Naive thymus-derived CD4-positive, alpha-beta T cell (primary cell): ENCODE measurements at regions of chr1 and their contacts with region 1.

Region 1: DNA sequence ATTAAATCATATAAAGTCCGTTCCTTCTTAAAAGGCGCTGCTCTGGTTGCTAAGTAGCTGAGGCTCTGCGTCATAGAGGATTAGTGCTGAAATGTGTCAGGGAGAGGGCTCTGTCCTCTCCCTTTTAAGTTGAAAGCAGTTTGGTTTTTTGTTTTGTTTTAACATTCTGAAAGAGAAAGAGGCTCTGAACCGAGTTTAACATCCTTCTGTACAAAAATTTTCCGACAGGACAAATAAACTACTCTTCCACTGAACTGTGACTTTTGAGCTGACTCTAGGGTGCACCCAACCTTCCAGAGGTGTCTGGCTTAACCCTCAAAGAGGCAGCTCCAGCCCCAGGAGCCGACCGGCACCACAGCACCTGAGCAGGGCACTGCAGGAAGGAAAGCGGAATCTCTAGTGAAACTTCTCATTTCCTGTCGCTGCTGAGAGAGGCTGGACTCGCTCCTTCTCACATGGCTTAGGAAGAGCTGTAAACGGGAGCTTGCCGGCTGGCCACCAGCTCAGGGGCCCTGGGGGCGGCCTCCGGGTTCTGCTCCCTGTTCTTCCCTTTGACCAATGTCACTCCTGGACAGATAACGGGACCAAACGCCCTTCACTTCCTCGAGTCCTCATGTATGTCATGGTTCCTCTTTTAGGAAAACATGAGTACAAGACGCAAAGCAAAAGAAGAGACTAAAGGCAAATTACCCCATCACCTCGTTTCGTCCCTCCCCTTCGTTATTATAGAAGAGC is 1.2 kb downstream of the VAV3 start:
- DNase-seq: peak; percentile 27 to 70 (median 62)
- ATAC-seq: peak; percentile 79
- H3K4me3 ChIP-seq: peak overlapping the region; percentile 87
- H3K4me3 Mint-ChIP-seq: peak overlapping the region; percentile 91 to 99 (median 98)
- H3K27ac ChIP-seq: peak overlapping the region; percentile 67
- H3K27ac Mint-ChIP-seq: peak overlapping the region; percentile 79 to 98 (median 92)
- H3K4me1 ChIP-seq: peaks cover 11% of the 10 kb centered on the region in 2 donors
- H3K4me1 Mint-ChIP-seq: peaks cover 15 to 43% (median 27%) of the 10 kb centered on the region in 7 donors
- H3K27me3 ChIP-seq: no peaks in the 10 kb centered on the region
- H3K27me3 Mint-ChIP-seq: peaks cover 0 to 3% (median 0%) of the 10 kb centered on the region in 5 donors

Region 2: DNA sequence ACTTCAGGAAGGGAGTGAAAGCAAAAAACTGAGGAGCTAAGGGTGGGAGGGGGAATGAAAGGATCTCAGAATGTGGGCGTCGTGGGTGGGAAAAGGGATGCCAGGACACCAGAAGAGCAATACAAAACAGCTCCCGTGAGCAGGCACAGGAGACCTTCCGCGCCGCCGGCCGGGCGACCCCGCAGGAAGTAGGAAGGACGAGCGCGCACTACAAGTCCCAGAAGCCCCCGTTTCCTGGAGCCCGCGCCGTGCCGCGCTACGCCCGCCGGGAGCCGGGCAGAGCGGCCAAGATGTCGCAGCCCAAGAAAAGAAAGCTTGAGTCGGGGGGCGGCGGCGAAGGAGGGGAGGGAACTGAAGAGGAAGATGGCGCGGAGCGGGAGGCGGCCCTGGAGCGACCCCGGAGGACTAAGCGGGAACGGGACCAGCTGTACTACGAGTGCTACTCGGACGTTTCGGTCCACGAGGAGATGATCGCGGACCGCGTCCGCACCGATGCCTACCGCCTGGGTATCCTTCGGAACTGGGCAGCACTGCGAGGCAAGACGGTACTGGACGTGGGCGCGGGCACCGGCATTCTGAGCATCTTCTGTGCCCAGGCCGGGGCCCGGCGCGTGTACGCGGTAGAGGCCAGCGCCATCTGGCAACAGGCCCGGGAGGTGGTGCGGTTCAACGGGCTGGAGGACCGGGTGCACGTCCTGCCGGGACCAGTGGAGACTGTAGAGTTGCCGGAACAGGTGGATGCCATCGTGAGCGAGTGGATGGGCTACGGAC is 907.2 kb before region 1 on chr1 and contains the start of gene PRMT6:
- CTCF ChIA-PET with region 1: interaction called, 3 read pairs
- POLR2A ChIA-PET with region 1: no interaction called
- intact Hi-C with region 1: loop called in 1 of 2 experiments (anchors 5 kb)
- DNase-seq: peak; percentile 62 to 85 (median 82)
- ATAC-seq: peak; percentile 94
- H3K4me3 ChIP-seq: peak within 1 kb of the TSS; percentile 95
- H3K4me3 Mint-ChIP-seq: peak within 1 kb of the TSS; percentile 96 to 100 (median 98)
- H3K27ac ChIP-seq: peak within 1 kb of the TSS; percentile 80
- H3K27ac Mint-ChIP-seq: peak within 1 kb of the TSS; percentile 95 to 98 (median 97)
- H3K4me1 ChIP-seq: peaks cover 11 to 12% of the 10 kb centered on the region in 2 donors
- H3K4me1 Mint-ChIP-seq: peaks cover 19 to 41% (median 29%) of the 10 kb centered on the region in 7 donors
- H3K27me3 ChIP-seq: no peaks in the 10 kb centered on the region
- H3K27me3 Mint-ChIP-seq: no peaks in the 10 kb centered on the region
- total RNA-seq, gene PRMT6: 7.4 to 22.1 (median 17.5) TPM

Region 3: DNA sequence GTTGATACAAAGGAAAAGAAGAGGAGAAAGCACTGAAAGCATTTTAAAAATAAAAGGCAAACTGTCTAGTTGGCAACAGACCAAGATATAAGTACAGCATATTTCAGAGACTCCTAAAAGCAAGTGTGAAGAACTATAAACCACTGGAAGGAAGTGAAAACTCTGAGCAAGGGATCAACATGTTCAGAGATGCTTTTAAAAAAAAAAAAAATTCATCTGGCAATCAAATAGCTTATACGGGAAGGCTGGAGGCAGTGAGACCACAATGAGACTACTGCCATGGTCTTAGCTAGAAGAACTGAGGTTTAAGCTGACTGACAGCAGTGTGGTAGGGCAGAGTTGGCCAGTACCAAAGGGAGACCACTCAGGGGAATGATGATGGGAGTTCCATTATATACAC is 123.0 kb before region 1 on chr1:
- CTCF ChIA-PET with region 1: no interaction called
- POLR2A ChIA-PET with region 1: no interaction called
- intact Hi-C with region 1: loop called in 1 of 2 experiments (anchors 5 kb)
- DNase-seq: no peak
- ATAC-seq: peak; percentile 50
- H3K4me3 ChIP-seq: peak overlapping the region; percentile 26
- H3K4me3 Mint-ChIP-seq: peak overlapping the region; percentile 0 to 75 (median 28)
- H3K27ac ChIP-seq: no peak overlapping the region
- H3K27ac Mint-ChIP-seq: peak overlapping the region; percentile 2 to 75 (median 25)
- H3K4me1 ChIP-seq: peaks cover 32 to 51% of the 10 kb centered on the region in 2 donors
- H3K4me1 Mint-ChIP-seq: peaks cover 38 to 87% (median 59%) of the 10 kb centered on the region in 7 donors
- H3K27me3 ChIP-seq: no peaks in the 10 kb centered on the region
- H3K27me3 Mint-ChIP-seq: no peaks in the 10 kb centered on the region

Region 4: DNA sequence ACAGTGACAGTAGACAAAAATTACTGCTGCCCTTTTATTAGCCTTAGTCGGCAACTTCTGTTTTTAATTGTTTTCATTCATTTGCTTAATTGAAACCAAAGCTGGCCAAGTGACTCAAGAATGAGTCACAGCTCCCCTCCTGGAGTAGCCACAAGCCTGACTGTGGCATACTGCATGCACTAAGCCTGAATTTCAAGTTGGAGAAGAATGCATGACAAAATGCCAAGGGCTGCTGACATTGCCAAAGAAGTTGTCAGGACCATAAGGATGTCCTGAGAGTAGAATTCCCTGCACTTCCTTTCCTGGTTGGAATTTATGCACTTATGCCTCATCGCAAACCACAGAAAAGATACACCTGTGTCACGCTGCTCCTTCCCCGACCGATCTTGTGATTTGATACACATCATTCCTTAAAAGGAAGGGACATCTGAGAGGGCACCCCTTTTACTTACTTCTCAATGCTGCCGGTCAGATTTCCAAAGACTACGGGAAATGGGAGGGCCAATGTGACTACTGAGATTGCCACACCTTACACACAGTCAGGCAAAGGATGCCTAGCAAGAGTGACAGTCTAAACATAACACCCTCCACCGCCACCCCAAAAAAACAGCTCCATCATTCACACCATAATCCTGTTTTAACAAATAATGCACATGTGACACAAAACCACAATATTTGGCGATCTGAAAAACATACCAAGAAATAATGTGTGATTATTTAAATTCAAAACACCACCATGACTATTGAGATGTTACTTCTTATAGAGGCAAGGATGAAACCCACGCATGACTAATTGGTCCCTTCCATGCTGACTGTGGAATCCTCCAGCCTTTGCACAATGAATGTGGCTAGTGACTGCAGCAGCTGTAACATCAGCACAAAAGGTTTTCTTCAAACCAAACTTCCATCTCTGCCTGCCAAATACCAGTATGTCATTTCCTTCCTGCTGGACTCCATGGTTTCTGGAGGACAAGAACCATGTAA is 27.0 kb before region 1 on chr1:
- CTCF ChIA-PET with region 1: no interaction called
- POLR2A ChIA-PET with region 1: no interaction called
- intact Hi-C with region 1: loop called (anchors 1 to 2 kb)
- DNase-seq: peak in 1 of 9 donors; percentile 43
- ATAC-seq: peak; percentile 82
- H3K4me3 ChIP-seq: no peak overlapping the region
- H3K4me3 Mint-ChIP-seq: peak overlapping the region in 2 of 10 donors; percentile 23 to 33
- H3K27ac ChIP-seq: no peak overlapping the region
- H3K27ac Mint-ChIP-seq: peak overlapping the region in 3 of 9 donors; percentile 7 to 28 (median 26)
- H3K4me1 ChIP-seq: peaks cover 0 to 14% of the 10 kb centered on the region in 2 donors
- H3K4me1 Mint-ChIP-seq: peaks cover 24 to 68% (median 38%) of the 10 kb centered on the region in 7 donors
- H3K27me3 ChIP-seq: no peaks in the 10 kb centered on the region
- H3K27me3 Mint-ChIP-seq: no peaks in the 10 kb centered on the region

Region 5: DNA sequence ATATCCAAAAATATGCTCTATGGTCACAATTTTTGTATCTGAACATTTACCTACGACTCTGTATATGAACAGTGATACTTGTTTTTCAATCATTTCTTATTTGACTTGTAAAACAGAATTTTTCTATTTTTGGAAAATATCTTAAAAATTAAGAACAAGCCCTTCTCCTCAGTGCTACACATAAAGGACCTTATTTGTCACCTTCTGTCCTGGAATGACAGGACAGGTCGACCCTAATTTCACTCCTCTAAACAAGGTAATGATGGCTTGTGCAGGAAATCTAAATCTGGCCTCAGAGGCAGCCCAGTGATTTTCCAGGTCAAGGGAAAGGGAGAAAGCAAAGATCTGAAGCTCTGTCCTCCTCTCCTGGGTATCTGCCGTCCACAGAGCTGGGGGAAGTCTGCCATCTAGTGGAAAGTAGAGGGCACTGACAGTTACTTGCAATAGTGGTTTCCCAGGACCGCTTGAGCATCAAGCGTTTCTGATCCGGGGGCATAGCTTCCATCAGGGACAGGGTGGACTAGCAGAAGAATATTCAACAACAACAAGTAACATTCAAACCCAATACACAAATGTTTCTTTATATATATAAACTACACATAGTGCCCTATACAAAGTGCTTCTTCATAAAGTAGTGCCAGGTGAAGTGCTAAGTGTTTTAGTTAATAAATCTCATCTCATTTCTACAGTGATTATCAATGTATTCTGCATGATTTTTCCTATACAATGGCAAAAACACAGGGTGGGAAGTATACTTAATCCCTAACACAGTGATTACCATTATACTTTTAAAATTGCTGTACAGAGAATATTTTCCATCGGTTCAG is 161.8 kb after region 1 on chr1:
- CTCF ChIA-PET with region 1: interaction called, 3 read pairs
- POLR2A ChIA-PET with region 1: interaction called, 4 read pairs
- intact Hi-C with region 1: loop called (anchors 1 kb)
- DNase-seq: peak; percentile 35 to 77 (median 67)
- ATAC-seq: peak; percentile 97
- H3K4me3 ChIP-seq: no peak overlapping the region
- H3K4me3 Mint-ChIP-seq: no peak overlapping the region
- H3K27ac ChIP-seq: no peak overlapping the region
- H3K27ac Mint-ChIP-seq: peak overlapping the region in 4 of 9 donors; percentile 19 to 69 (median 48)
- H3K4me1 ChIP-seq: no peaks in the 10 kb centered on the region
- H3K4me1 Mint-ChIP-seq: peaks cover 4 to 10% (median 5%) of the 10 kb centered on the region in 7 donors
- H3K27me3 ChIP-seq: no peaks in the 10 kb centered on the region
- H3K27me3 Mint-ChIP-seq: no peaks in the 10 kb centered on the region

Region 6: GRCh38 chr1:108643492-108644335 is 679.9 kb after region 1 on chr1:
- CTCF ChIA-PET with region 1: no interaction called
- POLR2A ChIA-PET with region 1: no interaction called
- intact Hi-C with region 1: loop called (anchors 5 to 10 kb)
- DNase-seq: peak in 7 of 9 donors; percentile 59 to 78 (median 67)
- ATAC-seq: peak; percentile 45
- H3K4me3 ChIP-seq: no peak overlapping the region
- H3K4me3 Mint-ChIP-seq: peak overlapping the region in 9 of 10 donors; percentile 4 to 70 (median 47)
- H3K27ac ChIP-seq: peak overlapping the region; percentile 71
- H3K27ac Mint-ChIP-seq: peak overlapping the region; percentile 68 to 100 (median 98)
- H3K4me1 ChIP-seq: peaks cover 49 to 52% of the 10 kb centered on the region in 2 donors
- H3K4me1 Mint-ChIP-seq: peaks cover 55 to 81% (median 75%) of the 10 kb centered on the region in 7 donors
- H3K27me3 ChIP-seq: no peaks in the 10 kb centered on the region
- H3K27me3 Mint-ChIP-seq: no peaks in the 10 kb centered on the region